ENCODE measurements at regions of chr1 and their contacts with region 1.

Region 1: DNA sequence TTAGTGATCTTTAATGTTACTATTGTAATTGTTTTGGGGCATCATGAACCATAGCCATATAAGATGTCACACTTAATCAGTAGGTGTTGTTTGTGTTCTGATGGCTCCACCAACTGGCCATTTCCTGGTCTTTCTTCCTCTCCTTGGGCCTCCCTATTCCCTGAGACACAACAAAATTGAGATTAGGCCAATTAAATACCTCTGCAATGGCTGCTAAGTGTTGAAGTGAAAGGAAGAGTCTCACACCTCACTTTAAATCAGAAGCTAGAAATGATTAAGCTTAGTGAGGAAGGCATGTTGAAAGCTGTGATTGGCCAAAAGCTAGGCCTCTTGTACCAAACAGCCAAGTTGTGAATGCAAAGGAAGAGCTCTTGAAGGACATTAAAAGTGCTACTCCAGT is 30.7 kb downstream of the PPP2R5A start:
- DNase-seq: no peak
- H3K4me3 Mint-ChIP-seq: no peak overlapping the region
- H3K27ac Mint-ChIP-seq: peak overlapping the region; percentile 3
- H3K4me1 Mint-ChIP-seq: peaks cover 20% of the 10 kb centered on the region
- H3K27me3 Mint-ChIP-seq: no peaks in the 10 kb centered on the region

Region 2: GRCh38 chr1:212070720-212071302 is 245.1 kb before region 1 on chr1:
- intact Hi-C with region 1: loop called (anchors 5 kb)
- DNase-seq: no peak
- H3K4me3 Mint-ChIP-seq: no peak overlapping the region
- H3K27ac Mint-ChIP-seq: no peak overlapping the region
- H3K4me1 Mint-ChIP-seq: peaks cover 4% of the 10 kb centered on the region
- H3K27me3 Mint-ChIP-seq: no peaks in the 10 kb centered on the region

Region 3: DNA sequence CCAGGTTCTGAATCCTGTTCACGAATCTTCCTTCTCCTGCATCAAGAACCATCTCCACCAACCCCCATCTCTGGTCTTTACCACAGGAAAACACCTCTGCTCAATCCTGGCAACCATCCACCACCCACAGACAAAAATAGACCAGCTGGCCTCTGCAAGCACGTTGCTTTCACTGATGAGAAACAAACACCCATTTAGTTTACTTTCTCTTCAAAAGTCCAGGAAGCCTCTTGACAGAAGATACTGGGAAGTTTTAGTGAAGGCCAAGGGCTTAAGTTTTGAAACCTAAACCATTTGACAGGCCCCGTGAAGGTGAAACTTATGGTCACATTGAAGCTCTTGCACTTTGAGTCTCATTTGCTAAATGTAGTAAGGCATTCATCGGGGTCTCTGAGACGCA is 153.3 kb before region 1 on chr1:
- intact Hi-C with region 1: loop called (anchors 5 kb)
- DNase-seq: peak; percentile 17
- H3K4me3 Mint-ChIP-seq: no peak overlapping the region
- H3K27ac Mint-ChIP-seq: peak overlapping the region; percentile 7
- H3K4me1 Mint-ChIP-seq: peaks cover 27% of the 10 kb centered on the region
- H3K27me3 Mint-ChIP-seq: no peaks in the 10 kb centered on the region